A549 (cell line): ENCODE measurements at regions of chr12 and their contacts with region 1.

Region 1: DNA sequence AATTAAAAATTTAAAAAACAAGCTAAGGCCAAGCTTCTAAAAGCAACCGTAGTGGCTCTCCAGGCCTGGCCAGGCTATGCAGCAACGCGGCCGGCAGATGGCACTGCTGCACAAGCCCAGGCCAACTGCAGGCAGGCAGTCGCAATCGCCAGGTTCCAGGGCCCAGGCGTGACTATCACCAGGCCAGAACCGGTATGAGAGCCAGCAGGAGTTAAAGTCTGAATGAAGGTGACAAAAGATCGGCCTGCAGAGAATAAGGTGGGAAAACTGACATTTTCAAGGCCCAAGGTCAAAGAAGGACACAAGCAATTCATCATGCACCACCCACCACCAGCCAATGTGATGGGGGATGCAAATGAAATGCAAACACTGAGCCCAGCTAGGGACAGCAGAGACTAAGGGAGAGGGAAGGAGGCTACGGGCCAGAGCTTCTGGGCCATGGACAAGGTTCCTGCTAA is 43.6 kb upstream of the ANO2 start:
- DNase-seq: peak; percentile 73 to 80
- ATAC-seq: peak; percentile 92 to 99
- H3K4me3 ChIP-seq: no peak overlapping the region
- H3K27ac ChIP-seq: no peak overlapping the region
- H3K4me1 ChIP-seq: no peaks in the 10 kb centered on the region
- CTCF ChIP-seq: peak; percentile 90
- EP300 ChIP-seq: no peak
- POLR2A ChIP-seq: no peak
- RAD21 ChIP-seq: peak; percentile 94 to 95

Region 2: GRCh38 chr12:5965950-5966383 is 22.7 kb before region 1 on chr12:
- CTCF ChIA-PET with region 1: interaction called, 57 read pairs
- POLR2A ChIA-PET with region 1: no interaction called
- DNase-seq: peak; percentile 63 to 66
- ATAC-seq: peak; percentile 94 to 98
- H3K4me3 ChIP-seq: no peak overlapping the region
- H3K27ac ChIP-seq: no peak overlapping the region
- H3K4me1 ChIP-seq: no peaks in the 10 kb centered on the region
- CTCF ChIP-seq: peak; percentile 74
- EP300 ChIP-seq: no peak
- POLR2A ChIP-seq: no peak
- RAD21 ChIP-seq: peak; percentile 33 to 49; a peak in 3 of 5 replicates

Region 3: DNA sequence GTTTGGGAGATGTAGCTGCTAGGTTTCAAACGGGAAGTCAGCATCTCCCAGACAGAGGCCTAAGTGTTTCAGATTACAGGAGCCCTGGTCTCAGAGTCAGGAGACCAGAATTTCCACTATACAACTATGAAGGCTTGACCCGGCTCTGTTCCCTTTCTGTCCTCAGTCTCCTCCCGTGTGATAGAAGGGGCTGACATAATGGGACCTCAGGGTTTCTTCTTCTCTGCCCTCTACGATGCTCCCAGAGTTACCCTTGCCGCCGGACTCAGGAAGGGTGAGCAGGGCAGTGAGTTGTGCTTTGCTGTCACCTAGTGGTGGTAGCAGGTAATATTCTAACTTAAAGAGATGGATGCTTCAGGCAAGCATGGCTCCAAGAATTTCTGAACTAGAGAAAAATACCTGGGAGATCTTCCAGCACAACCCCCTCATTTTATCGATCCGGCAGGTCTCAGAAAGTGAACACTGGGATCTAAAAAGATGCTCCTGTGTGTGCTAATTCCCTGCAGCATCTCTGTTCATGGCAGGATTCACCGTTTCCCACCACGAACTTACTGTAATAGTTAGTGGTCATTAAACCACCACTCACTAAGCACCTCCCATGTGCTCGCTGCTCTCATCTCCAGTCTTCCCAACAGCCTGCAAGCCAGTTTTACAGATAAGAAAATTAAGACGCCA is 51.3 kb after region 1 on chr12:
- CTCF ChIA-PET with region 1: interaction called, 361 read pairs
- POLR2A ChIA-PET with region 1: interaction called, 4 read pairs
- DNase-seq: peak; percentile 72 to 79
- ATAC-seq: peak; percentile 75 to 87
- H3K4me3 ChIP-seq: no peak overlapping the region
- H3K27ac ChIP-seq: no peak overlapping the region
- H3K4me1 ChIP-seq: peaks cover 7% of the 10 kb centered on the region; the same call in 2 of the 3 replicates
- CTCF ChIP-seq: peak; percentile 90
- EP300 ChIP-seq: no peak
- POLR2A ChIP-seq: no peak
- RAD21 ChIP-seq: peak; percentile 91 to 96

Region 4: DNA sequence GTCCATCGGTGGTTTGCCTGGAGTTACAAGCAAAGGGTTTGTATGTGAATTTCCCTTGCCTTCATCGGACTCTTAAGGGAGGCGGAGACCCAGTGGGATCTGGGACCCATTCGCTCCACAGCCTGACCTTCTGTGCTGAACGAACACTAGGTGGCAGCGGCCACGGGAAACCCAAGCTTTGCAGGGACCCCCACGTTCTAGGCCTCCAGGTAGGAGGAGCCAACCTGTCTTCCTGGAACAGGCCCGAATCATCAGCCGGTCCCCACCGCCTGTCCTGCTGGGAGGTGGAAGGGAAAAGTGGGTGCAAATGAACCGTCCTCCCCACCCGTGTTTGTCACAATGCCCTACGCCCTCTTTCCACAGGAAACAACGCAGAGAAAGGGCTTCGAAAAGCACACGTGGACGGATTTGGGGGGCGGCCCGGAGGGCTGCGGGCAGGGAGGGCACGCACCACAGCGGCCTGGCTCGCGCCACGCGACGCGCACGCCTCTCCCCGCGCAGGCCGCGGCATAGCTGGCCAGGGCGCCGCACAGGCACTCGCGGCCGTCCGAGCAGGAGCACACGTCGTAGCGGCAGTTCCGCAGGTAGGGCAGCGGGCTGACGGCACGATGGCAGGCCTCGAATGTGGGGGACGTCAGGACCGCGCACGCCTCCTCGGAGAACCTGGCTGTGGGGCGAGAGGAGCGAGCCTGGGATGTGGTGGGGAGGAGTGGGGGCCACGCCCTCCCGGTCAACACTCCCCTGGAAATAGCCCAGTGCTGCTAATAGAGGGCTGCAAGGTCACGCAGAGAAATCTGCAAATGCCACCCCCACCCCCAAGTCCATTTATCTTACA is 67.9 kb after region 1 on chr12:
- CTCF ChIA-PET with region 1: interaction called, 17 read pairs
- POLR2A ChIA-PET with region 1: no interaction called
- DNase-seq: peak in 1 of 2 experiments; percentile 39
- ATAC-seq: peak in 1 of 2 experiments; percentile 78; a peak in 3 of 6 replicates
- H3K4me3 ChIP-seq: no peak overlapping the region
- H3K27ac ChIP-seq: no peak overlapping the region
- H3K4me1 ChIP-seq: no peaks in the 10 kb centered on the region
- CTCF ChIP-seq: no peak; the same call in 2 of the 3 replicates
- EP300 ChIP-seq: no peak
- POLR2A ChIP-seq: no peak
- RAD21 ChIP-seq: 0 out of 5 replicates have a peak, but pooled peaks of 1 of the 2 experiments have one; percentile 12

Region 5: GRCh38 chr12:6084261-6084968 is 95.7 kb after region 1 on chr12:
- CTCF ChIA-PET with region 1: interaction called, 10 read pairs
- POLR2A ChIA-PET with region 1: no interaction called
- DNase-seq: peak; percentile 46 to 57
- ATAC-seq: peak; percentile 35 to 55; a peak in 3 of 6 replicates
- H3K4me3 ChIP-seq: no peak overlapping the region
- H3K27ac ChIP-seq: peak overlapping the region in 1 of 2 experiments; percentile 31; a peak in 1 of 6 replicates
- H3K4me1 ChIP-seq: peaks cover 20% of the 10 kb centered on the region
- CTCF ChIP-seq: no peak
- EP300 ChIP-seq: no peak
- POLR2A ChIP-seq: no peak
- RAD21 ChIP-seq: no peak